Mucosa of descending colon (tissue), 3 donors: ENCODE measurements at regions of chr1 and their contacts with region 1.

Region 1: GRCh38 chr1:84944767-84945486 is 51.9 kb upstream of the LPAR3 start:
- DNase-seq: peak in 2 of 3 donors; percentile 43 to 77
- ATAC-seq: peak; percentile 99
- H3K4me3 ChIP-seq: no peak overlapping the region
- H3K4me1 ChIP-seq: peaks cover 4% of the 10 kb centered on the region
- CTCF ChIP-seq: peak; percentile 77

Region 2: GRCh38 chr1:85001742-85002141 is 56.8 kb after region 1 on chr1:
- intact Hi-C with region 1: no loop called
- DNase-seq: no peak
- ATAC-seq: no peak
- H3K4me3 ChIP-seq: no peak overlapping the region
- H3K4me1 ChIP-seq: peaks cover 12% of the 10 kb centered on the region
- CTCF ChIP-seq: no peak

Region 3: GRCh38 chr1:85027242-85027983 is 82.5 kb after region 1 on chr1:
- intact Hi-C with region 1: loop called in 1 of 2 experiments (anchors 2 kb)
- DNase-seq: no peak
- ATAC-seq: peak; percentile 68
- H3K4me3 ChIP-seq: no peak overlapping the region
- H3K4me1 ChIP-seq: no peaks in the 10 kb centered on the region
- CTCF ChIP-seq: no peak

Region 4: DNA sequence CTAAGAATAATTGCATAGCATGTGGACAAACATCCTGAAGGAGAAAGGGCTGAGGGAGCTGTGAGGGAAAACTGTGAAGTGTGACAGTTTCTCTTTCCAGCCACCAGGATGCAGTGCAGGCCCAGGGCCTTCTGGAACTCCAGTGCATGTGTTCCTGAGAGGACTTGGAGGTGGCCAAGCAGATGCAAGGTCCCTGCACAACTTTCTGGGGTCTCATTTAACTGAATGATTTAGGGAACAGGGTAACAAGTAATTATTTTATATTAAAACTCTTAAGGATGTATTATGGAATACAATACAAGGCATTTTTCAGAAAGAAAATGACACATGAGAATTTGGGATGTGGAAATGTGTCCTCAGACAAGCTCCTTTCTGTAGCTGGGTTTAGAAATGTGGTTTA is 164.5 kb after region 1 on chr1:
- intact Hi-C with region 1: loop called in 1 of 2 experiments (anchors 10 kb)
- DNase-seq: peak in 2 of 3 donors; percentile 60 to 63
- ATAC-seq: peak; percentile 94
- H3K4me3 ChIP-seq: no peak overlapping the region
- H3K4me1 ChIP-seq: no peaks in the 10 kb centered on the region
- CTCF ChIP-seq: peak; percentile 69